AG04450 (cell line): ENCODE measurements at regions of chr6 and their contacts with region 1.

Region 1: DNA sequence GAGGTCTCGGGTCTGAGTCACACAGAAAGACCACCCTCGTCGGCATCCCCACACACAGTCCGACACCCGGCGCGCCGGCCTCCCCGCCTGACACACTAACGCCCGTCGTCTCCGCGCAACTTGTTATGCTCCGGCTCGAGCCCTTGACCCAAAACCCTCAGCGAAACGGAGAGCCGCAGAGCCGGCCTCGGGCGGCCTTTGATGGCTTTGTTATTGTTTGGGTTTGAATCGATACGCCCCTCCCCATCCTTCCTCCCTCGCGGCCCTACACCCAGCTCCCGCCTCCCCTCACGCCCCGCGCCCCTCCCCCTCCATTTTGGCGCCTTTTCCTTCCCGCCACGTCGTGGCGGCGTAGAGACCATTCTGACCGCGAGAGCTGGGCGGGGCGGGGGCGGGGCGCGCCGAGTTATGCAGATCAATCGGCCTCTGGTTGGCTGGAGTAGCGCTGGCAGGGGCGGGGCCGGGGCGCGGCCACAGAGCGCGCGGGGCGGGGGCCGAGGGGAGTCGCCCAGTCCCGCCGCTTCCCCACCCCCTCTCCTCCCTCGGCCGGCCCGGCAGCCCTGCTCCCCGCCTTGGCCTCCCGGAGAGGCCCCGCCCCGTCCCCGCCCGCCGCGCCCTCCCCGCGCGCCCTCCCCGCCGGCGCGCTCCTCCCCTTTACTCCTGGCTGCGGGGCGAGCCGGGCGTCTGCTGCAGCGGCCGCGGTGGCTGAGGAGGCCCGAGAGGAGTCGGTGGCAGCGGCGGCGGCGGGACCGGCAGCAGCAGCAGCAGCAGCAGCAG is at the start of gene PIM1:
- DNase-seq: peak; percentile 95
- H3K4me3 ChIP-seq: peak within 1 kb of the TSS; percentile 95
- H3K27ac ChIP-seq: peak within 1 kb of the TSS; percentile 99
- H3K27me3 ChIP-seq: no peaks in the 10 kb centered on the region
- CTCF ChIP-seq: no peak
- polyA plus RNA-seq, gene PIM1: 35.3 and 37.5 TPM in 2 replicates

Region 2: GRCh38 chr6:37029249-37029971 is 140.3 kb before region 1 on chr6:
- CTCF ChIA-PET with region 1: interaction called, 57 read pairs
- POLR2A ChIA-PET with region 1: interaction called, 3 read pairs
- DNase-seq: peak; percentile 69
- H3K4me3 ChIP-seq: no peak overlapping the region
- H3K27ac ChIP-seq: no peak overlapping the region
- H3K27me3 ChIP-seq: peaks cover 3% of the 10 kb centered on the region
- CTCF ChIP-seq: peak; percentile 79

Region 3: DNA sequence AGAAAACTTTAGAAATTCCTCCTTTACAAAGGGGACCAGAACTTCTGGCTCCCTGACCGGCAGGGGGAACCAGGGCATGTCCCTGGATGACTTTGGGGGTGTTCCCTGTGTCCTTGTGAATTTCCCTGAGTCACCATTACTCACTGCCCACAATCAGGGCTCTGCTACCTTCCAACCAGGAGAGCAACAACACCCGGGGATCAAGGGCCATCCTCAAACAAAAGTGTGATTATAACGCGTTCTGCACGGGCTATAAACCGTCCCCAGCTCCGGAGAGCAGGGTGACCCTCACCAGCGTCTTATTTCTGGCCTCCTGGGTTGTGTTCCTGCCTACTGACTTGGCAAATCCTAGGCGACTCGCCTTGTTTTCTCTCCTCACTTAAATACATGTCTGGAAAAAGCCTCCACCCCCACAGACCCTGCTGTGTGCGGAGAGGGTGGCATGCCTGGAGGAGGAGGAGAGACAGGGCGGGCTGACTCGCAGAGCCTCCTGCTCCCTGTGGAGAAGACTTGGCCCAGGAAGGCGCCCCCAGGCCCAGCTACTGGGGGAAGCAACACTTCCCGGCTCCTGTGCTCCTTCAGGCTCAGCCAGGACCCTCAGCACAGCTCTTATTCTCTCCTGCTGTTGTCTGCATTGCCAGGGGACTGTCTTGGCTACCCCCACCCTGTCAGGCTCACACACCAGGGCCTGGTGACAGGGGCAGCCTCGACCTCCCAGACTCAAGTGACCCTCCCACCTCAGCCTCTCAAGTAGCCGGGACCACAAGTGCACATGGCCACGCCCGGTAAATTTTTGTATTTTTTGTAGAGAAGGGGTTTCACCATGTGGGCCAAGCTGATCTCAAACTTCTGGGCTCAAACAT is 110.1 kb before region 1 on chr6:
- CTCF ChIA-PET with region 1: interaction called, 36 read pairs
- POLR2A ChIA-PET with region 1: interaction called, 3 read pairs
- DNase-seq: peak; percentile 81
- H3K4me3 ChIP-seq: peak overlapping the region; percentile 29
- H3K27ac ChIP-seq: peak overlapping the region; percentile 97
- H3K27me3 ChIP-seq: no peaks in the 10 kb centered on the region
- CTCF ChIP-seq: peak; percentile 77

Region 4: GRCh38 chr6:37131104-37131959 is 38.4 kb before region 1 on chr6:
- CTCF ChIA-PET with region 1: interaction called, 5 read pairs
- POLR2A ChIA-PET with region 1: interaction called, 12 read pairs
- DNase-seq: no peak
- H3K4me3 ChIP-seq: no peak overlapping the region
- H3K27ac ChIP-seq: peak overlapping the region; percentile 39
- H3K27me3 ChIP-seq: no peaks in the 10 kb centered on the region
- CTCF ChIP-seq: no peak

Region 5: GRCh38 chr6:37145431-37145830 is 24.3 kb before region 1 on chr6:
- CTCF ChIA-PET with region 1: no interaction called
- POLR2A ChIA-PET with region 1: interaction called, 49 read pairs
- DNase-seq: no peak
- H3K4me3 ChIP-seq: no peak overlapping the region
- H3K27ac ChIP-seq: peak overlapping the region; percentile 97
- H3K27me3 ChIP-seq: no peaks in the 10 kb centered on the region
- CTCF ChIP-seq: no peak